CD8-positive, alpha-beta T cell (primary cell): ENCODE measurements at regions of chr9 and their contacts with region 1.

Region 1: GRCh38 chr9:4984621-4985385 is at the start of gene JAK2:
- DNase-seq: peak; percentile 44 to 90 (median 74)
- ATAC-seq: peak; percentile 85
- H3K4me3 ChIP-seq: peak within 1 kb of the TSS; percentile 62 to 78
- H3K4me3 Mint-ChIP-seq: peak within 1 kb of the TSS; percentile 92
- H3K27ac ChIP-seq: peak within 1 kb of the TSS; percentile 58 to 80
- H3K27ac Mint-ChIP-seq: peak within 1 kb of the TSS; percentile 91
- H3K4me1 ChIP-seq: peaks cover 26% of the 10 kb centered on the region
- H3K4me1 Mint-ChIP-seq: peaks cover 25% of the 10 kb centered on the region
- H3K27me3 ChIP-seq: no peaks in the 10 kb centered on the region
- H3K27me3 Mint-ChIP-seq: no peaks in the 10 kb centered on the region
- CTCF ChIP-seq: no peak
- total RNA-seq, gene JAK2: 4.6 to 6.1 TPM

Region 2: GRCh38 chr9:4596165-4596922 is 388.5 kb before region 1 on chr9:
- CTCF ChIA-PET with region 1: no interaction called
- POLR2A ChIA-PET with region 1: no interaction called
- intact Hi-C with region 1: loop called in 1 of 2 experiments (anchors 10 kb)
- DNase-seq: peak; percentile 21 to 87 (median 61)
- ATAC-seq: peak; percentile 90
- H3K4me3 ChIP-seq: no peak overlapping the region
- H3K4me3 Mint-ChIP-seq: peak overlapping the region; percentile 62
- H3K27ac ChIP-seq: peak overlapping the region; percentile 57 to 68
- H3K27ac Mint-ChIP-seq: peak overlapping the region; percentile 98
- H3K4me1 ChIP-seq: peaks cover 49% of the 10 kb centered on the region
- H3K4me1 Mint-ChIP-seq: peaks cover 61% of the 10 kb centered on the region
- H3K27me3 ChIP-seq: no peaks in the 10 kb centered on the region
- H3K27me3 Mint-ChIP-seq: no peaks in the 10 kb centered on the region
- CTCF ChIP-seq: peak; percentile 8

Region 3: GRCh38 chr9:4762108-4762885 is 222.5 kb before region 1 on chr9:
- CTCF ChIA-PET with region 1: interaction called, 108 read pairs
- POLR2A ChIA-PET with region 1: interaction called, 3 read pairs
- intact Hi-C with region 1: loop called (anchors 1 kb)
- DNase-seq: peak; percentile 61 to 87 (median 80)
- ATAC-seq: peak; percentile 80
- H3K4me3 ChIP-seq: no peak overlapping the region
- H3K4me3 Mint-ChIP-seq: peak overlapping the region; percentile 47
- H3K27ac ChIP-seq: no peak overlapping the region
- H3K27ac Mint-ChIP-seq: no peak overlapping the region
- H3K4me1 ChIP-seq: no peaks in the 10 kb centered on the region
- H3K4me1 Mint-ChIP-seq: peaks cover 10% of the 10 kb centered on the region
- H3K27me3 ChIP-seq: peaks cover 0 to 6% of the 10 kb centered on the region in 2 experiments
- H3K27me3 Mint-ChIP-seq: peaks cover 9% of the 10 kb centered on the region
- CTCF ChIP-seq: peak; percentile 87

Region 4: GRCh38 chr9:4838189-4838546 is 146.6 kb before region 1 on chr9:
- CTCF ChIA-PET with region 1: no interaction called
- POLR2A ChIA-PET with region 1: no interaction called
- intact Hi-C with region 1: no loop called
- DNase-seq: no peak
- ATAC-seq: no peak
- H3K4me3 ChIP-seq: no peak overlapping the region
- H3K4me3 Mint-ChIP-seq: no peak overlapping the region
- H3K27ac ChIP-seq: no peak overlapping the region
- H3K27ac Mint-ChIP-seq: no peak overlapping the region
- H3K4me1 ChIP-seq: no peaks in the 10 kb centered on the region
- H3K4me1 Mint-ChIP-seq: peaks cover 1% of the 10 kb centered on the region
- H3K27me3 ChIP-seq: no peaks in the 10 kb centered on the region
- H3K27me3 Mint-ChIP-seq: no peaks in the 10 kb centered on the region
- CTCF ChIP-seq: no peak

Region 5: DNA sequence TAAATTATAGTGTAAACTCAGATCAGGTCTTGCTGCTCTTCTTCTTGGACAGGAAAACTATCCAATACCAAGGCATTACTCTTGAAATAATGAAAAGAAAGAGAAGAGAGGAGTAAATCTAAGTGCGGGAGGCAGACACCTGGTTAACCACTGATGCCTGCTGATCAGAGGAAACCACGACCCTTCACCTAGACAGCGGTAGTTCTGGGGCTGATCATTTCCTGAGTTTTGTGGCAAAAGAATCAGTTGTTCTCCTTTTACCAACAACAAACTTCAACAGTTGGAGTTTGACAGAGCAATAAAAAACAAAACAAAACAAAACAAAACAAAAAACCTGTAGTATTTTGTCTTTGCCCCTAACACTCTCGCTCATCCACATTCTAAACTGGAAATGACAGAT is 351.9 kb after region 1 on chr9:
- CTCF ChIA-PET with region 1: no interaction called
- POLR2A ChIA-PET with region 1: no interaction called
- intact Hi-C with region 1: loop called in 1 of 2 experiments (anchors 10 kb)
- DNase-seq: peak in 5 of 9 experiments; percentile 23 to 69 (median 47)
- ATAC-seq: peak; percentile 19
- H3K4me3 ChIP-seq: peak overlapping the region; percentile 2 to 31
- H3K4me3 Mint-ChIP-seq: peak overlapping the region; percentile 71
- H3K27ac ChIP-seq: peak overlapping the region; percentile 28 to 30
- H3K27ac Mint-ChIP-seq: peak overlapping the region; percentile 89
- H3K4me1 ChIP-seq: peaks cover 27% of the 10 kb centered on the region
- H3K4me1 Mint-ChIP-seq: peaks cover 54% of the 10 kb centered on the region
- H3K27me3 ChIP-seq: no peaks in the 10 kb centered on the region
- H3K27me3 Mint-ChIP-seq: no peaks in the 10 kb centered on the region
- CTCF ChIP-seq: no peak

Region 6: DNA sequence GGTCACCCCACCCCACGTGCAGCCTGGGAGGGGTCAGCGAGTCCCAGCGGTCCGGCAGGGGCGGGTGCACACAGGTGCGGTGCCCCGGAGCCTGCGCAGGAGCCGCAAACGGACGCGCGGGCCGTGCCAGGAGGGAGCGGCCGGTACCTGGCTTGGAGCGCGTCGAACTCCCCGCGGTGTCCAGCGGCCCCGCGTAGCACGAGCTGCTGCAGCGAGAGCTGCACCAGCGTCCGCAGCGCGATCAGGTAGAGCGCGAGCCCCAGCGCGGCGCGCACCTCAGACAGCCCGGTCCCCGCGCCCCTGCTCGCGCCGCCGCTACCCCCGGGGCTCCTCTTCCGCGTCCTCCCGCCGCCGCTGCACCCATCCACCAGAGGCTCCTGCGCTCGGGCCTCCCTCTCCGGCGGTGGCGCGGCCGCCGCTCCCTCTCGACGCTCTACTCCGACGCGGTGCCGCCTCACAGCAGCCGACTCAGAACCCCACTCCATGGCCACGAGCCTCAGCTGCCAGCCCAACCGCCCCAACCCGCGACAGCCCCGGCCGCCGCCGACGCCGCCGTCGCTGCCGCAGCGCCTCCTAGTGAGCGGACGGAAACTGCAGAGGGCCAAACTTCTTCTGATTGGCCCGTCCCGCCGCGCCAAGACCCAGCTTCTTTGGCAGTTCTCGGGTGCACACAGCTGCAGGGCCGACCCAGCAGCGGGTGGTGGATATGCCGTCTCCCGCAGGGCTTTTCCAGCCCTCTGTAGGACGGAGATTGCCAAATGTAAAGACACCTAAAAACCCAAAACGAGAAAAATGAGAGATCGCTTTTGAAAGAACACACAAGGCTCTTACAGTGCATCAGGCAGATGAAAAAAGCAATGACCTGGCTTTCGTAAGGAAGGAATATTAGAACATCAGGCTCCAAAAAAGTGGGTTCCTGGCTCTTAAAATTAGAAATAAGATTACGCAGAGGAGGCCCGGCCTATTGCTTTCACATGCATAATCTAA is 848.0 kb after region 1 on chr9 and contains the start of gene ERMP1:
- CTCF ChIA-PET with region 1: no interaction called
- POLR2A ChIA-PET with region 1: interaction called, 3 read pairs
- intact Hi-C with region 1: loop called in 1 of 2 experiments (anchors 10 kb)
- DNase-seq: peak; percentile 85 to 95 (median 92)
- ATAC-seq: peak; percentile 87
- H3K4me3 ChIP-seq: peak within 1 kb of the TSS; percentile 57 to 91
- H3K4me3 Mint-ChIP-seq: peak within 1 kb of the TSS; percentile 96
- H3K27ac ChIP-seq: peak within 1 kb of the TSS in 1 of 2 experiments; percentile 41
- H3K27ac Mint-ChIP-seq: peak within 1 kb of the TSS; percentile 88
- H3K4me1 ChIP-seq: peaks cover 34% of the 10 kb centered on the region
- H3K4me1 Mint-ChIP-seq: peaks cover 66% of the 10 kb centered on the region
- H3K27me3 ChIP-seq: no peaks in the 10 kb centered on the region
- H3K27me3 Mint-ChIP-seq: no peaks in the 10 kb centered on the region
- CTCF ChIP-seq: peak; percentile 83
- total RNA-seq, gene ERMP1: 5.2 to 7.9 TPM